ENCODE measurements at regions of chr19 and their contacts with region 1.

Region 1: GRCh38 chr19:32789429-32789828 is 69.9 kb downstream of the TDRD12 start:
- DNase-seq: no peak
- H3K4me3 ChIP-seq: no peak overlapping the region
- H3K4me3 Mint-ChIP-seq: no peak overlapping the region
- H3K27ac Mint-ChIP-seq: no peak overlapping the region
- H3K4me1 ChIP-seq: no peaks in the 10 kb centered on the region
- H3K4me1 Mint-ChIP-seq: no peaks in the 10 kb centered on the region
- H3K27me3 ChIP-seq: no peaks in the 10 kb centered on the region
- H3K27me3 Mint-ChIP-seq: no peaks in the 10 kb centered on the region
- CTCF ChIP-seq: no peak

Region 2: GRCh38 chr19:33618884-33619283 is 829.5 kb after region 1 on chr19:
- CTCF ChIA-PET with region 1: no interaction called
- POLR2A ChIA-PET with region 1: interaction called, 17 read pairs
- intact Hi-C with region 1: no loop called
- DNase-seq: no peak
- H3K4me3 ChIP-seq: no peak overlapping the region
- H3K4me3 Mint-ChIP-seq: no peak overlapping the region
- H3K27ac Mint-ChIP-seq: no peak overlapping the region
- H3K4me1 ChIP-seq: 0 out of 2 replicates have a peak, but pooled peaks cover 5% of the 10 kb centered on the region
- H3K4me1 Mint-ChIP-seq: no peaks in the 10 kb centered on the region
- H3K27me3 ChIP-seq: peaks cover 4% of the 10 kb centered on the region
- H3K27me3 Mint-ChIP-seq: peaks cover 22% of the 10 kb centered on the region
- CTCF ChIP-seq: no peak